CD8-positive, alpha-beta memory T cell (primary cell): ENCODE measurements at regions of chr2 and their contacts with region 1.

Region 1: DNA sequence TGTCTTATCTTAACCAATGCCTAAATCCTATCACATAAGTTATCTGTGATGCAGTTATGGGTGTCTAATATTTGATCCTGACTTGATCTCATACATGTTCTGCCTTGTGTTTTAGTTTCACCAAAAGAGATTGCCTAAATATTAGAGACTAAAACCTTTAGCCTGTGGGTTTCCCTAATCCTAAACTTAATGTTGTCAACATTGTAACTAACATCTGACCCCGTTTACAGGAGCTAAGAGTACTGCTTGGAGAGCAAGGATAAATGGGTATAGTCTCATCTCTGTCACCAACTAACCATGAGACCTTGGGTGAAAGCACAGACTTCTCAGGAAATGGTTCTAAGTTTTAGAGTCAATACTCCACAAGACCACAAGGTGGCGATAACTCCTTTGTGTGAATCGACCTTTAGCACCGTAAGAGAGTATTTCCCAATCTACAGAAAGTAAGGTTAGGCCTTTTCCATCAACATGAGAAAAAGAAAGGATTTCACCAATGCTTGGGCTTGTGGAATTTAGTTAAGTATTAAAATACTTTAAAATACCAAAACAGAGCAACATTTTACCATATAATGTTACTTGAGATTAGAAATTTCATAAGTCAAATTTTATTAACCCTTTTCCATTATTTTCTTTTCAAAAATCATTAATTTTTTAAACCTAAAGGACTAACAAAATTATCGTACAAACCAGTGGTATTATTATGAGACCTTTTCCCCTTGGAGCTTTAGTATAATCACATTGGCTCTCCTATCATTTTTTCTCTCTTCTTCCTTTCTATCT is 60.5 kb downstream of the G6PC2 start:
- DNase-seq: peak; percentile 2 to 56 (median 41)
- H3K4me3 ChIP-seq: no peak overlapping the region
- H3K4me3 Mint-ChIP-seq: no peak overlapping the region
- H3K27ac ChIP-seq: no peak overlapping the region
- H3K27ac Mint-ChIP-seq: peak overlapping the region in 1 of 8 donors; percentile 59
- H3K4me1 ChIP-seq: peaks cover 17% of the 10 kb centered on the region
- H3K4me1 Mint-ChIP-seq: peaks cover 20 to 28% (median 27%) of the 10 kb centered on the region in 3 donors
- H3K27me3 ChIP-seq: no peaks in the 10 kb centered on the region
- H3K27me3 Mint-ChIP-seq: peaks cover 0 to 12% of the 10 kb centered on the region in 2 donors

Region 2: DNA sequence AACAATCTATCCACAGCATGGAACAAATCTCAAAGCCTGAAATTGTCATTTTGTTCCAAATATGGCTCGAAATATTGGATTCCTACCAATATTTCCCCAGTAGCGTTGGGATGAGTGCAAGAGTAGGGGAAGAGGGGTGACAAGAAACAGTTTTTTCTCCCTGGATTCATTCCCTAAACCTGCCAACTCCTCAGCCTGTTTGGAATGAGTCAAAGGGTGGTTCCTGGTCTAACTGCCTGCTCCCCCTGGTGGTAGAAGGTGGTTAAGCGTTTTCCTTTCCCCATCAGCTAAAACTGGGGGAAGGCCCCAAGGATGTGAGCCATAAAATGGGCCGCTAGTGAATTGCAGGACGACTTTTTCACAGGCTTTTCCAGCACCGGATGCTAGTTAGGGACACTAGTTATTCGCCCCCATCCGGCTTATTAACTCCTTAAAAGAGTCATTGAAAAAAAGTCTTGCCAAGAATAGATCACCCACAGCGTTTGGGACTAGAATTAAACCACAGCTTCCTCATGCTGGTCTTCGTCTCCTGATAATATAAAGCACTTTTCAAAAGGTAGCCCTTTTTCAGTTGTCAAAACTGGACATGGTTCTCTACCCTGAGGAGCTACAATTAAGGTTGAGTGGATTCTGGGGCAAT is 180.2 kb after region 1 on chr2:
- CTCF ChIA-PET with region 1: interaction called, 15 read pairs
- POLR2A ChIA-PET with region 1: no interaction called
- DNase-seq: peak; percentile 37 to 67 (median 53)
- H3K4me3 ChIP-seq: no peak overlapping the region
- H3K4me3 Mint-ChIP-seq: no peak overlapping the region
- H3K27ac ChIP-seq: no peak overlapping the region
- H3K27ac Mint-ChIP-seq: no peak overlapping the region
- H3K4me1 ChIP-seq: no peaks in the 10 kb centered on the region
- H3K4me1 Mint-ChIP-seq: no peaks in the 10 kb centered on the region
- H3K27me3 ChIP-seq: no peaks in the 10 kb centered on the region
- H3K27me3 Mint-ChIP-seq: peaks cover 0 to 3% of the 10 kb centered on the region in 2 donors